ENCODE measurements at regions of chr7 and their contacts with region 1.

Region 1: DNA sequence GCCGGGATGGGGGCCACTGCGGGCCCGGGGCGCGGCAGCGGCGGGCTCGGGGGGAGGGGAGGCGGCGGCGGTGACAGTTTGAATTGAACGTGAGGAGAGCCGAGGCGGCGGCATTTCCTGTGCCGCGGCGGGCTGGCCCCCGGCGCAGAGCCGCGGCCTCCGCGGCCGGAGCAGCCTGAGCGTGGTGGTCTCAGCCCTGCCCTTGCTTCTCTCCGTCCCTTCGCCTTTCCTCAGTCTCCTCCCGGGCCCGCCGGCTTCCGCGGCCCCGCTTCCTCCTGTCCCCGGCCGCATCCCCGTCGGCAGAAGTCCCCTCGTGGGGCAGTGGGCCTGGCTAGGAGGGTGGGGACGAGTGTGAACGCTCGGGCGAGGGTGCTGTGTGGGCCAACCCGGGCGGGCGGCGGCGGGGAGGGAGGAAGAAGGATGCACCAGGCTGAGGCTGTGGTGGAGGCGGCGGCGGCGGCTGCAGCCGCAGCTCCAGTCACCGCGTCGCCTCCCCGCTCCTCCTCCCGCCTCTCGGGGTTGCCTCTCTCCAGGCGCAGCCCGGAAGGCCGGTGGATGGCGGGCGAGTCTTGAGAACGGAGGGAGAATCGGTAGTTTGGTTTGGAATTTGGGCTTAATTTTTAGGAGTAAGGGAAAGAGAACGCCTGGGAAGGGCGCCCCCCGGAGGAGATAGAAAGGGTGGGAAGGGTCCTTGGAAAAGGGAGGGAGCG is 690 bp downstream of the SEPTIN7 start:
- DNase-seq: peak; percentile 79 to 88 (median 81)
- H3K4me3 ChIP-seq: peak overlapping the region; percentile 4 to 67
- H3K4me3 Mint-ChIP-seq: peak overlapping the region; percentile 91 to 96 (median 94)
- H3K27ac ChIP-seq: peak overlapping the region; percentile 95
- H3K27ac Mint-ChIP-seq: peak overlapping the region; percentile 92 to 99 (median 99)
- H3K4me1 ChIP-seq: peaks cover 52% of the 10 kb centered on the region
- H3K4me1 Mint-ChIP-seq: peaks cover 35 to 61% (median 45%) of the 10 kb centered on the region in 4 donors
- H3K27me3 ChIP-seq: no peaks in the 10 kb centered on the region
- H3K27me3 Mint-ChIP-seq: no peaks in the 10 kb centered on the region

Region 2: GRCh38 chr7:35714862-35715261 is 86.7 kb before region 1 on chr7:
- CTCF ChIA-PET with region 1: interaction called, 33 read pairs
- POLR2A ChIA-PET with region 1: interaction called, 14 read pairs
- intact Hi-C with region 1: no loop called
- DNase-seq: no peak
- H3K4me3 ChIP-seq: no peak overlapping the region
- H3K4me3 Mint-ChIP-seq: no peak overlapping the region
- H3K27ac ChIP-seq: no peak overlapping the region
- H3K27ac Mint-ChIP-seq: peak overlapping the region in 1 of 7 donors; percentile 14
- H3K4me1 ChIP-seq: peaks cover 5% of the 10 kb centered on the region
- H3K4me1 Mint-ChIP-seq: peaks cover 0 to 8% (median 6%) of the 10 kb centered on the region in 4 donors
- H3K27me3 ChIP-seq: no peaks in the 10 kb centered on the region
- H3K27me3 Mint-ChIP-seq: no peaks in the 10 kb centered on the region

Region 3: DNA sequence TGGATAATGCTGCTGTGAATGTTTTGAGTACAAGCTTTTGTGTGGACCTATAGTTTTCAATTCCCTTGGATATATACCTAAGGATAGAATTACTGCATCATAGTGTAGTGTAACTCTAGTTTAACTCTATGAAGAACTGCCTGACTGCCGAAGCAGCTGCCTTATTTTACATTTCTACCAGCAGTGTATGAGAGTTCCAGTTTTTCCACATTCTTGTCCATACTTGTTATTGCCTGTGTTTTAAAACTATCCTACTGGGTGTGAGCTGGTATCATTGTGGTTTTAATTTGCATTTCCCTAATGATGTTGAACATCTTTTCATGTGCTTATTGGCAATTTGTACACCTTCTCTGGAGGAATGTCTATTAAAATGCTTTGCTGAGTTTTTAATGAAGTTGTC is 15.0 kb after region 1 on chr7:
- CTCF ChIA-PET with region 1: interaction called, 7 read pairs
- POLR2A ChIA-PET with region 1: interaction called, 30 read pairs
- intact Hi-C with region 1: no loop called
- DNase-seq: no peak
- H3K4me3 ChIP-seq: no peak overlapping the region
- H3K4me3 Mint-ChIP-seq: peak overlapping the region in 3 of 8 donors; percentile 26 to 35 (median 31)
- H3K27ac ChIP-seq: no peak overlapping the region
- H3K27ac Mint-ChIP-seq: no peak overlapping the region
- H3K4me1 ChIP-seq: peaks cover 52% of the 10 kb centered on the region
- H3K4me1 Mint-ChIP-seq: peaks cover 67 to 93% (median 80%) of the 10 kb centered on the region in 4 donors
- H3K27me3 ChIP-seq: no peaks in the 10 kb centered on the region
- H3K27me3 Mint-ChIP-seq: no peaks in the 10 kb centered on the region

Region 4: DNA sequence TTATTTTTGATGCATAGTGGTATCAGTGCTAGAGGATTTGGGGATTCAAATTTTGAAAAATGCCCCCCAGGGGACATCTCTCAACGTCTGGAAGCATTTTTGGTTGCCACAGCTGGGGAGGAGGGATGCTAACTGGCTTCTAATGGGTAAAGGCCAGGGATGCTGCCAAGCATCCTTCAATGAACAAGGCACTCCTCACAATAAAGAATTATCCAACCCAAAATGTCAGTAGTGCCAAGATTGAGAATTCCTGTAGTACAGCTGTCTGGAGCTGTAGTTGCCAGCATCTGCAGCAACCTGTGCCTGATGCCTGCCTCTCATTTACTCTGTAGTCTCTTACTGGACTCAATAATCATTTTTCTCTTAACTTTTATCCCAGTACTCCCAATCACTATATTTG is 52.8 kb after region 1 on chr7:
- CTCF ChIA-PET with region 1: no interaction called
- POLR2A ChIA-PET with region 1: interaction called, 18 read pairs
- intact Hi-C with region 1: no loop called
- DNase-seq: no peak
- H3K4me3 ChIP-seq: no peak overlapping the region
- H3K4me3 Mint-ChIP-seq: no peak overlapping the region
- H3K27ac ChIP-seq: no peak overlapping the region
- H3K27ac Mint-ChIP-seq: peak overlapping the region in 1 of 7 donors; percentile 23
- H3K4me1 ChIP-seq: peaks cover 20% of the 10 kb centered on the region
- H3K4me1 Mint-ChIP-seq: peaks cover 44 to 80% (median 66%) of the 10 kb centered on the region in 4 donors
- H3K27me3 ChIP-seq: no peaks in the 10 kb centered on the region
- H3K27me3 Mint-ChIP-seq: no peaks in the 10 kb centered on the region

Region 5: DNA sequence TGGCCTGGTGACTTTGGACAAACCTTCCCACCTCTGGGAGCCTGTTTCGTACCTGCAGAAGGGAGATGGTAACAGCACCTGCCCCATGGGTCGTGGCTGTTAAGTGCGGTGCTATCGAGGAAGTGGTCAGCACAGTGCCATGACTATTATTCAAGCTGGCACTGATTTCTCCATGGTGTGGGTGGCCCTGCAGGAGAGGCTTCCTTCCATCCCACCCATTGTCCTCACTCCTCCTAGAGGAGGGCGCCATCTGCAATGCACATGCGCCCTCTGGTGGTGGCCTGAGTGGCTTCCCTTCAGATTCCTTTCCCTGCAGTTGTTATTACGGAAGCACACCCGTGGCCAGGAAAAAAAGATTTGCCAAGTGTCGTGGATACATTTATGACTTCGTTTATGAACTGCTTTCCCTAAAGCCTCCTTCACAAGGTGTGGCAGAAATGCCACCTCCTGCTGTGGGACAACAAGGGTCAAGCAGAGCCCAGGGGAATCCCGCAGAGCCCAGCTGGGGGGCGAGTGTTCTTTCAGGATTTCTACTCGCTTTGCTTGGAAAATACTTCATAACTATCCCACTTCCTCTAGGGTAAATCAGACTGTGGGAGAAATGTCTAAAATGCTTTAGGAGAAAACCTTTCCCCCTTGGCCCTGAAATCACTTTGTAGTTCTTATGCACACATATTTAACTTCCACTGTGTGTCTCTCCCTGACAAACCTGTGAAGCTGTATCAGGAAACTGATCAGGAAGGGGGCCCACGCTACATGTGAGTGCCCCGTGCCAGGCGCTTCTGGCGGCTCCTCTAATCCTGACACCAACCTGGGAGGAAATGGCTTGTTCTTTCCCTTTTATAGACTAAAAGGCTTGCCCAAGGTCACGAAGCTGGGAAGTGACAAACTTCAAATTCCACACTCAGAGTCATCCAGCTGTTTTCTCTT is 490.1 kb after region 1 on chr7:
- CTCF ChIA-PET with region 1: no interaction called
- POLR2A ChIA-PET with region 1: interaction called, 10 read pairs
- intact Hi-C with region 1: loop called (anchors 5 kb)
- DNase-seq: peak; percentile 56 to 70 (median 62)
- H3K4me3 ChIP-seq: no peak overlapping the region
- H3K4me3 Mint-ChIP-seq: peak overlapping the region; percentile 55 to 83 (median 68)
- H3K27ac ChIP-seq: no peak overlapping the region
- H3K27ac Mint-ChIP-seq: peak overlapping the region in 6 of 7 donors; percentile 52 to 89 (median 80)
- H3K4me1 ChIP-seq: peaks cover 50% of the 10 kb centered on the region
- H3K4me1 Mint-ChIP-seq: peaks cover 36 to 61% (median 49%) of the 10 kb centered on the region in 4 donors
- H3K27me3 ChIP-seq: no peaks in the 10 kb centered on the region
- H3K27me3 Mint-ChIP-seq: no peaks in the 10 kb centered on the region